ENCODE measurements at regions of chr10 and their contacts with region 1.

Region 1: GRCh38 chr10:100433253-100434240 is 29.3 kb upstream of the WNT8B start:
- DNase-seq: peak; percentile 90 to 99 (median 93)
- ATAC-seq: peak; percentile 100
- H3K4me3 ChIP-seq: no peak overlapping the region
- H3K4me3 Mint-ChIP-seq: no peak overlapping the region
- H3K27ac ChIP-seq: no peak overlapping the region
- H3K27ac Mint-ChIP-seq: no peak overlapping the region
- H3K4me1 ChIP-seq: no peaks in the 10 kb centered on the region
- H3K4me1 Mint-ChIP-seq: peaks cover 2% of the 10 kb centered on the region
- H3K27me3 ChIP-seq: no peaks in the 10 kb centered on the region
- H3K27me3 Mint-ChIP-seq: no peaks in the 10 kb centered on the region
- CTCF ChIP-seq: peak; percentile 98

Region 2: GRCh38 chr10:99788598-99789256 is 644.8 kb before region 1 on chr10:
- CTCF ChIA-PET with region 1: no interaction called
- POLR2A ChIA-PET with region 1: no interaction called
- intact Hi-C with region 1: no loop called
- DNase-seq: no peak
- ATAC-seq: no peak
- H3K4me3 ChIP-seq: no peak overlapping the region
- H3K4me3 Mint-ChIP-seq: no peak overlapping the region
- H3K27ac ChIP-seq: no peak overlapping the region
- H3K27ac Mint-ChIP-seq: no peak overlapping the region
- H3K4me1 ChIP-seq: no peaks in the 10 kb centered on the region
- H3K4me1 Mint-ChIP-seq: no peaks in the 10 kb centered on the region
- H3K27me3 ChIP-seq: no peaks in the 10 kb centered on the region
- H3K27me3 Mint-ChIP-seq: no peaks in the 10 kb centered on the region
- CTCF ChIP-seq: no peak

Region 3: DNA sequence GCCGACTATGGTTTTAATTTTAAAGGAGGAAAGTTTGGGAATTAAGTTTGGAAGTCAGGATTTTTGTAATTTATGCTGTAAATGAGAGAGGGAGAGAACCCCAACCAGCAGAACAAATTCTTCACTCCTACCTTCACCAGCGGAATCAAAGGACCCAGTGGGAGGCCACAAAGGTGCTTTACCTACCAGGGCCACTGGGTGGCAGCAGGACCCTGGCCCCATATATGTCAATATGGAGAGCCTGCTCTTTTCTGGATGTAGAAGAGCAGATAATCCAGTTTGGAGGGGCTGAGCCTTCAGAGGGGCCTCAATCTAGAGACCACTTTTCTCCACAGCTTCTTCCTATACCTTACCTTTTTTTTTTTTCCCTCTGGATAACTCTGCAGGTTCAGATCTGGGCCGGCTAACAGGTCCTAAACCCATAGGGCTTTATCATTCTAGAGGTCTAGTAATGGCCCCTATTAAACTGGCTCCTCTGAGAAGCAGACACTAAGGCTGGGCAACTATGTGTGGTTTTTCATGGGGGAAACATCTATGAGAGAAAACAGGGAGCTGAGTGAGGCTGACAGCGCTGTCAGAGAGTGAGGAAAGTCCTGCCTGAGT is 95.0 kb before region 1 on chr10:
- CTCF ChIA-PET with region 1: interaction called, 225 read pairs
- POLR2A ChIA-PET with region 1: no interaction called
- intact Hi-C with region 1: loop called (anchors 1 kb)
- DNase-seq: peak; percentile 67 to 86 (median 81)
- ATAC-seq: peak; percentile 93
- H3K4me3 ChIP-seq: no peak overlapping the region
- H3K4me3 Mint-ChIP-seq: no peak overlapping the region
- H3K27ac ChIP-seq: no peak overlapping the region
- H3K27ac Mint-ChIP-seq: no peak overlapping the region
- H3K4me1 ChIP-seq: no peaks in the 10 kb centered on the region
- H3K4me1 Mint-ChIP-seq: no peaks in the 10 kb centered on the region
- H3K27me3 ChIP-seq: no peaks in the 10 kb centered on the region
- H3K27me3 Mint-ChIP-seq: peaks cover 5% of the 10 kb centered on the region
- CTCF ChIP-seq: peak; percentile 77

Region 4: GRCh38 chr10:100364735-100365391 is 68.7 kb before region 1 on chr10:
- CTCF ChIA-PET with region 1: interaction called, 10 read pairs
- POLR2A ChIA-PET with region 1: no interaction called
- intact Hi-C with region 1: no loop called
- DNase-seq: no peak
- ATAC-seq: no peak
- H3K4me3 ChIP-seq: no peak overlapping the region
- H3K4me3 Mint-ChIP-seq: no peak overlapping the region
- H3K27ac ChIP-seq: no peak overlapping the region
- H3K27ac Mint-ChIP-seq: no peak overlapping the region
- H3K4me1 ChIP-seq: peaks cover 1% of the 10 kb centered on the region
- H3K4me1 Mint-ChIP-seq: peaks cover 9% of the 10 kb centered on the region
- H3K27me3 ChIP-seq: no peaks in the 10 kb centered on the region
- H3K27me3 Mint-ChIP-seq: no peaks in the 10 kb centered on the region
- CTCF ChIP-seq: no peak

Region 5: GRCh38 chr10:100419911-100420449 is 13.6 kb before region 1 on chr10:
- CTCF ChIA-PET with region 1: interaction called, 13 read pairs
- POLR2A ChIA-PET with region 1: no interaction called
- intact Hi-C with region 1: no loop called
- DNase-seq: no peak
- ATAC-seq: no peak
- H3K4me3 ChIP-seq: no peak overlapping the region
- H3K4me3 Mint-ChIP-seq: no peak overlapping the region
- H3K27ac ChIP-seq: no peak overlapping the region
- H3K27ac Mint-ChIP-seq: no peak overlapping the region
- H3K4me1 ChIP-seq: no peaks in the 10 kb centered on the region
- H3K4me1 Mint-ChIP-seq: no peaks in the 10 kb centered on the region
- H3K27me3 ChIP-seq: no peaks in the 10 kb centered on the region
- H3K27me3 Mint-ChIP-seq: peaks cover 5% of the 10 kb centered on the region
- CTCF ChIP-seq: no peak

Region 6: DNA sequence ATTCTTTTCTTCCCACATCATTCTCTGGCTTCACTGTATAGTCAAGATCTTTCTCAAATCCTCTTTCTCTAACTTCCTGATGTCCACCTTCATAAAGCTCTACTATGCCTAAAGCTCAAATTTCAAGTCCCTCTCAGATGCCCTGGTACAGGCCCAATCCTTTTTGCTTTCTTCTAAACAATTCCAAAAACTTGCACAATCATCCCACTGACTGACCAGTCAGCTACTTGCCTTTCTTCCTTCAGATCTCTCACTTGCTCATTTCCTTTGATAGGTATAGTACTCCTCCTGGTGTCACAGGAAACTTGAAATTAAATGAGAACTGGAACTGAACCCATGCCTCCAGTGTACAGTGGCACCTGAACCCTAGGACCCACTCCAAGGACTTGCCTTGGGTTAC is 67.9 kb after region 1 on chr10:
- CTCF ChIA-PET with region 1: interaction called, 298 read pairs
- POLR2A ChIA-PET with region 1: no interaction called
- intact Hi-C with region 1: no loop called
- DNase-seq: no peak
- ATAC-seq: no peak
- H3K4me3 ChIP-seq: no peak overlapping the region
- H3K4me3 Mint-ChIP-seq: no peak overlapping the region
- H3K27ac ChIP-seq: no peak overlapping the region
- H3K27ac Mint-ChIP-seq: no peak overlapping the region
- H3K4me1 ChIP-seq: peaks cover under 1% of the 10 kb centered on the region
- H3K4me1 Mint-ChIP-seq: peaks cover 13% of the 10 kb centered on the region
- H3K27me3 ChIP-seq: no peaks in the 10 kb centered on the region
- H3K27me3 Mint-ChIP-seq: no peaks in the 10 kb centered on the region
- CTCF ChIP-seq: no peak

Region 7: DNA sequence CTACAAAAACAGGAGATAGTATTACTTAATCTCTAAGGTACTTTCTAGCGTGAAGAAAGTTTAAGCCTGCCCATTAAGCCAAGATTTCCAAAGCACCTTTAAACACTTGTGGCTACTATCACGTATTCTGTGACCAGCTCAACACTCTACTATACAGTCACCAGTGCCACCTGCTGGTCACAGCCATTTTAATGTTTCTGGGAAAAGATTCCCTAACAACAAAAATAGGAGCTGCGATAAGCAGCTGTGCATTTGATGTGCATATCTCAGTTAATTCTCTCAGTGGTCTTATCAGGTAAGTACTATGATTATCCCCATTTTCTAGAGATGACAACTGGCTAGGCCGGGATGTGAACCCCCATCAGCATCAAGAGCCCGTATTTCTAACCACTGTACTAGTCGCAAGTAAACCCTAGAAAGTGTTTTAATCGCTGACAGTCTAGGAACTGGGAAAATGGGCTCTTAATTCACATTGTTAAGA is 85.3 kb after region 1 on chr10:
- CTCF ChIA-PET with region 1: interaction called, 298 read pairs
- POLR2A ChIA-PET with region 1: interaction called, 3 read pairs
- intact Hi-C with region 1: loop called (anchors 1 kb)
- DNase-seq: peak; percentile 25 to 75 (median 67)
- ATAC-seq: peak; percentile 86
- H3K4me3 ChIP-seq: no peak overlapping the region
- H3K4me3 Mint-ChIP-seq: no peak overlapping the region
- H3K27ac ChIP-seq: no peak overlapping the region
- H3K27ac Mint-ChIP-seq: no peak overlapping the region
- H3K4me1 ChIP-seq: peaks cover 11% of the 10 kb centered on the region
- H3K4me1 Mint-ChIP-seq: peaks cover 21% of the 10 kb centered on the region
- H3K27me3 ChIP-seq: no peaks in the 10 kb centered on the region
- H3K27me3 Mint-ChIP-seq: no peaks in the 10 kb centered on the region
- CTCF ChIP-seq: peak; percentile 90

Region 8: GRCh38 chr10:100743626-100744135 is 310.1 kb after region 1 on chr10:
- CTCF ChIA-PET with region 1: no interaction called
- POLR2A ChIA-PET with region 1: no interaction called
- intact Hi-C with region 1: loop called in 1 of 2 experiments (anchors 10 kb)
- DNase-seq: peak in 8 of 9 experiments; percentile 10 to 80 (median 40)
- ATAC-seq: peak; percentile 79
- H3K4me3 ChIP-seq: no peak overlapping the region
- H3K4me3 Mint-ChIP-seq: peak overlapping the region; percentile 22
- H3K27ac ChIP-seq: no peak overlapping the region
- H3K27ac Mint-ChIP-seq: no peak overlapping the region
- H3K4me1 ChIP-seq: peaks cover 43% of the 10 kb centered on the region
- H3K4me1 Mint-ChIP-seq: peaks cover 37% of the 10 kb centered on the region
- H3K27me3 ChIP-seq: peaks cover 45 to 67% of the 10 kb centered on the region in 2 experiments
- H3K27me3 Mint-ChIP-seq: peaks cover 69% of the 10 kb centered on the region
- CTCF ChIP-seq: peak; percentile 42